ENCODE measurements at regions of chr14 and their contacts with region 1.

Region 1: GRCh38 chr14:103638594-103638993 is 9.6 kb downstream of the KLC1 start:
- DNase-seq: no peak
- H3K4me3 ChIP-seq: no peak overlapping the region
- H3K27ac ChIP-seq: no peak overlapping the region
- H3K4me1 ChIP-seq: no peaks in the 10 kb centered on the region
- H3K27me3 ChIP-seq: no peaks in the 10 kb centered on the region
- CTCF ChIP-seq: no peak

Region 2: DNA sequence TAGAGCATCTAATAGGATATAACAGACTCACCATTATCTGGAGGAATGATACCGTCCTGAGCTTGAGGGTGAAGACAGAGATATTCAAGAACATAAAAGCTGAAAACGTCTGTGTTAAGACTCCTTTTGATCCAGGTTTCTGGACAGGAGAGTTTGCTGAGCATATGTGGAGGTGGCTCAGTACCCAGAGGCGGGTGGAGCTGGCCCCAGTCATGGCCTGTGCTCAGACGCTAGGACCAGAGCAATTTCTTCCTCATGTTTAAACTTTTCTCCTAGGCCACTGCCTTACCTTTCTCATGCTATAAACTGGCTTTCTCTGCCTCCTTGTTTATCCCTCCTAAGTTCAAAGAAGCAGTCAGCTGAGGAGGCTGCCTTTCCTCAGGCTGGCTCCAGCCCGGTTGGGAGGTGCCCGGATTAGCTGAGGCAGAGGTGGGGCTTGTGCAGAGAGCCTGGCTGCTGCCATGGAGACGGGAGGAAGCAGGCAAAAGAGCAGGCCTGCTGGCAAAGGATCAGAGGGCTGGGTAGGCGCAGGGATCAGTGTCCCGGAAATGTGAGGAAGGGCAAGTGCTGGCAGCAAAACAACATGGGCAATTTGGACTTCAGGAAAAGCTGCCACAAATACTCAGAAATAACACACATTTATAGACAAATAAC is 62.1 kb before region 1 on chr14:
- intact Hi-C with region 1: no loop called
- DNase-seq: peak; percentile 97
- H3K4me3 ChIP-seq: no peak overlapping the region
- H3K27ac ChIP-seq: peak overlapping the region; percentile 81
- H3K4me1 ChIP-seq: peaks cover 6% of the 10 kb centered on the region
- H3K27me3 ChIP-seq: no peaks in the 10 kb centered on the region
- CTCF ChIP-seq: no peak

Region 3: GRCh38 chr14:103679351-103679750 is 40.8 kb after region 1 on chr14:
- intact Hi-C with region 1: loop called (anchors 5 kb)
- DNase-seq: peak; percentile 38
- H3K4me3 ChIP-seq: no peak overlapping the region
- H3K27ac ChIP-seq: no peak overlapping the region
- H3K4me1 ChIP-seq: no peaks in the 10 kb centered on the region
- H3K27me3 ChIP-seq: no peaks in the 10 kb centered on the region
- CTCF ChIP-seq: peak; percentile 17

Measured in colonic mucosa (tissue), 4 donors.